Left colon (tissue), 2 donors: ENCODE measurements at regions of chr10 and their contacts with region 1.

Region 1: GRCh38 chr10:101095542-101096213 is 33.9 kb downstream of the KAZALD1 start:
- DNase-seq: peak; percentile 86 to 92
- ATAC-seq: peak; percentile 98

Region 2: GRCh38 chr10:101141616-101142532 is 46.2 kb after region 1 on chr10:
- intact Hi-C with region 1: loop called (anchors 5 to 10 kb)
- DNase-seq: peak; percentile 56 to 83
- ATAC-seq: peak; percentile 95

Region 3: GRCh38 chr10:102033787-102034186 is 938.1 kb after region 1 on chr10:
- intact Hi-C with region 1: no loop called
- DNase-seq: no peak
- ATAC-seq: no peak